GM23248 (cell line): ENCODE measurements at regions of chr14 and their contacts with region 1.

Region 1: GRCh38 chr14:89767861-89768268 is 186.7 kb downstream of the EFCAB11 start:
- DNase-seq: peak; percentile 76
- H3K4me3 ChIP-seq: no peak overlapping the region
- H3K27ac ChIP-seq: no peak overlapping the region
- H3K4me1 ChIP-seq: no peaks in the 10 kb centered on the region
- H3K27me3 ChIP-seq: no peaks in the 10 kb centered on the region

Region 2: DNA sequence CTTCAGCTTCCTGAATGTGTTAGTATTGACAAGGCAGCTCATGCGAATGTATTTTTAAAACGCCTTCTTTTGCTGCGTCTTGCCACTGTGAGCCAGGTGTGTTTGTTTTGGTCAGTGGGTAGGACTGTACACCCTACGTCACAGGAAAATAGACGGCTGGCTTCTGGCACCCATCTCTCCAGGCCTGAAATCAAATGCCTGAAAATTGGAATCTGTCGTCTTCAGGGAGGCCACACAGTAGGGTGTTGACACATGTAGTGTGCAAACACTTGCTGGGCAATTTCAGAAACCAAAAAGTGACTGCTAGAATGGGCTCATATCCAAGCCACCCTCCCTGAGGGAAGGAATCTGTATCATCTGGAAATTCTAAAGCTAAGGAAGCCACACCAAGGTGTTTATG is 734.1 kb before region 1 on chr14:
- in situ Hi-C with region 1: loop called (anchors 10 kb)
- DNase-seq: no peak
- H3K4me3 ChIP-seq: no peak overlapping the region
- H3K27ac ChIP-seq: no peak overlapping the region
- H3K4me1 ChIP-seq: no peaks in the 10 kb centered on the region
- H3K27me3 ChIP-seq: no peaks in the 10 kb centered on the region